ENCODE measurements at regions of chr14 and their contacts with region 1.

Region 1: GRCh38 chr14:92612988-92613658 is 99.5 kb downstream of the RIN3 start:
- DNase-seq: peak; percentile 70
- H3K4me3 Mint-ChIP-seq: no peak overlapping the region
- H3K27ac Mint-ChIP-seq: peak overlapping the region; percentile 70
- H3K4me1 Mint-ChIP-seq: peaks cover 73% of the 10 kb centered on the region
- H3K27me3 Mint-ChIP-seq: no peaks in the 10 kb centered on the region

Region 2: DNA sequence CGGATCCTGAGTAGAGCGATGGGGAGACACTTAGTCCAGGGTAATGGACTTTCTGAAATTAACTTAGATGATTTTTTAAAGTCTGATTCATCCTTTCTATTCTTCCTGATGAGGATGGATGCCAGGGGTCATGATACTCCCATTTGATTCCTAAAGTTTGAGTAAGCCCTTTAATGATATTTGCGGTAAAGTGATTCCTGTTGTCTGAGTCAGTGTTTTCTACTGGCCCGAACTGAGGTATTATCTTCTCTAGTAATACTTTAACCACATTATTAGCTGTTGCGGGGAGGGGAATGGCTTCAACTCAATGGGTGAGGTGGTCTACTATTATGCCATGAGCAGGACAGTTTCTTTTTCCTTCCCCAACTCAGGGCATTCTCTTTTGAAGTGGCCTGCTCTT is 12.1 kb after region 1 on chr14:
- CTCF ChIA-PET with region 1: no interaction called
- DNase-seq: no peak
- H3K4me3 Mint-ChIP-seq: no peak overlapping the region
- H3K27ac Mint-ChIP-seq: no peak overlapping the region
- H3K4me1 Mint-ChIP-seq: no peaks in the 10 kb centered on the region
- H3K27me3 Mint-ChIP-seq: peaks cover 6% of the 10 kb centered on the region

Region 3: DNA sequence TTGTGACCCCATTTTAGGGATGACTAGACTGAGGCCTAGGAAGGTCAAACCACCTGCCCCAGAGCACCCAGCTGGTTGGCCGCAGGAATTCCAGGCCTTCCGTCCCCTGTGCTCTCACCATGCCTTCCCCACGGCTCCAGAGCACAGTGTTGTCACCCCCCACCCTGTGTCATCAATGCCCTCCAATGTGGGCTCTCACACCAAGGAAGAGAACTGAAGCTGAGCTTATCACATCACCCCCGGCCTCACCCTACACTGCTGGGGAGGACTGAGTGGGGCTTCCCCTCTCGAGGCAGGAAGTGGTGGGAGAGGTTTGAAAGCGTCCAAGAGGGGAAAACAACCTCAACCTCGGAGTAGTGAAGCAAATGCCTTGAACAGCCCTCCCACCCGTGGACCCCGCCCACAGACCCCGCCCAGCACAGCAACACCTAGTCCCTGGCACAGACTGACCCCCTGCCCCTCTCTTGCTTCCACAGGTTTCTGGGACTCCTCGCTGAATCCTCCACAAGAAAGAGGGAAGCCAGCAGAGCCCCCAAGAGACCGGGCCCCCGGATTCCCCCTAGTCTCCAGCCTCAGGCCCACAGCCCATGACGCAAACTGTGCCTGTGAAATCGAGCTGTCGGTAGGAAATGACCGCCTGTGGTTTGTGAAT is 38.1 kb after region 1 on chr14:
- CTCF ChIA-PET with region 1: interaction called, 12 read pairs
- DNase-seq: peak; percentile 91
- H3K4me3 Mint-ChIP-seq: peak overlapping the region; percentile 97
- H3K27ac Mint-ChIP-seq: peak overlapping the region; percentile 97
- H3K4me1 Mint-ChIP-seq: peaks cover 78% of the 10 kb centered on the region
- H3K27me3 Mint-ChIP-seq: no peaks in the 10 kb centered on the region

Region 4: DNA sequence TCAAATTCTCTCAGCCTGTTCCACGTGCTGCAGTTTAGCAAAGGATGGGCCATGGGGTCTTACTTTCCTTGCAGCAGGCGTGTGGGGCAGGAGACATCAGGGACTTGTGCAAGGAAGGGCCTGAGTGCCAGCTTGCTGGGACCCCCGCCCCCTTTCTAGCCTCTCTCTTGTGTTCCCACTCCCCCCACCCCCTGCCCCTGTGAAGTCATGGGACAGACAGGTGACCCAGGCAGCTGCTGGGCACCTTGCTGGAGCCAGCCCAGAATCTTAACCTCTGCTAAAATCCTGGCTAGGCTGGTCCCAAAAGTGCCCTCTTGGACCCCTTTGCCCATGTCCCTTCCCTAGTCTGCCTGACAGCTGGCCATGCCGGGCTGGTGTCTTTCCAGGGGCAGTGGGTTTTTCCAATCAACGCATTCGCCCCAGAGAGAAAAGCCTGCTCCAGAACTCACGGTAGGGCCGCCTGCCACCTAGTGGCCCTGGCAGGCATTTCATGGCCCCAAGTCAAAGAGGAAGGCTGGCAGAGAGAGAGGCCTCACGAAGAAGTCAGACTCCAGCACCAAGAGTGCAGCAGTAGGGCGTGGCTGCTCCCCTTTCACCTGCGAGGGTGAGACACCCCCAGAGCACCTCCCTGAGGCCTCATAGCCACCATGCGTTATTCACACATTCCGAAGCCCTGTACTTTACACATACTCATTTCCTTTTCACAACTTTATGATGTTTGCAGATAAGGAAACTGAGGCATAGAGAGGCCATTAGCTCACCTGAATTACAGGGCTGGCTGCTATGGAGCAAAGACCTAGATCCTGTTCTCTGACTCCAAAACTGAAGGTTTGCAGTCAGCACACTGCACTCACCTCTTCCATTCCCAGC is 67.9 kb after region 1 on chr14:
- CTCF ChIA-PET with region 1: interaction called, 14 read pairs
- DNase-seq: peak; percentile 78
- H3K4me3 Mint-ChIP-seq: no peak overlapping the region
- H3K27ac Mint-ChIP-seq: peak overlapping the region; percentile 59
- H3K4me1 Mint-ChIP-seq: peaks cover 33% of the 10 kb centered on the region
- H3K27me3 Mint-ChIP-seq: no peaks in the 10 kb centered on the region

Measured in activated naive CD4-positive, alpha-beta T cell treated with anti-CD3 and anti-CD28 coated beads, Interleukin-2, amount 10 ng/mL, durations not matched to agents 7 days and 5 days (primary cell).